ENCODE measurements at regions of chr6 and their contacts with region 1.

Region 1: GRCh38 chr6:159862103-159862502 is 28.7 kb upstream of the MAS1 start:
- DNase-seq: peak; percentile 12
- ATAC-seq: peak; percentile 53
- H3K4me3 Mint-ChIP-seq: no peak overlapping the region
- H3K27ac Mint-ChIP-seq: peak overlapping the region; percentile 21
- H3K4me1 Mint-ChIP-seq: peaks cover 15% of the 10 kb centered on the region
- H3K27me3 Mint-ChIP-seq: peaks cover 2% of the 10 kb centered on the region
- CTCF ChIP-seq: no peak

Region 2: GRCh38 chr6:159627939-159628338 is 234.2 kb before region 1 on chr6:
- CTCF ChIA-PET with region 1: no interaction called
- POLR2A ChIA-PET with region 1: no interaction called
- intact Hi-C with region 1: no loop called
- DNase-seq: no peak
- ATAC-seq: no peak
- H3K4me3 Mint-ChIP-seq: no peak overlapping the region
- H3K27ac Mint-ChIP-seq: no peak overlapping the region
- H3K4me1 Mint-ChIP-seq: no peaks in the 10 kb centered on the region
- H3K27me3 Mint-ChIP-seq: no peaks in the 10 kb centered on the region
- CTCF ChIP-seq: no peak

Region 3: GRCh38 chr6:159941286-159942113 is 79.4 kb after region 1 on chr6:
- CTCF ChIA-PET with region 1: interaction called, 9 read pairs
- POLR2A ChIA-PET with region 1: no interaction called
- intact Hi-C with region 1: loop called (anchors 5 kb)
- DNase-seq: peak; percentile 61
- ATAC-seq: peak; percentile 92
- H3K4me3 Mint-ChIP-seq: no peak overlapping the region
- H3K27ac Mint-ChIP-seq: no peak overlapping the region
- H3K4me1 Mint-ChIP-seq: peaks cover 5% of the 10 kb centered on the region
- H3K27me3 Mint-ChIP-seq: no peaks in the 10 kb centered on the region
- CTCF ChIP-seq: peak; percentile 42

Region 4: GRCh38 chr6:160102956-160103824 is 241.1 kb after region 1 on chr6:
- CTCF ChIA-PET with region 1: interaction called, 3 read pairs
- POLR2A ChIA-PET with region 1: no interaction called
- intact Hi-C with region 1: loop called (anchors 10 kb)
- DNase-seq: peak; percentile 47
- ATAC-seq: peak; percentile 55
- H3K4me3 Mint-ChIP-seq: no peak overlapping the region
- H3K27ac Mint-ChIP-seq: no peak overlapping the region
- H3K4me1 Mint-ChIP-seq: peaks cover 12% of the 10 kb centered on the region
- H3K27me3 Mint-ChIP-seq: no peaks in the 10 kb centered on the region
- CTCF ChIP-seq: peak; percentile 51

Region 5: DNA sequence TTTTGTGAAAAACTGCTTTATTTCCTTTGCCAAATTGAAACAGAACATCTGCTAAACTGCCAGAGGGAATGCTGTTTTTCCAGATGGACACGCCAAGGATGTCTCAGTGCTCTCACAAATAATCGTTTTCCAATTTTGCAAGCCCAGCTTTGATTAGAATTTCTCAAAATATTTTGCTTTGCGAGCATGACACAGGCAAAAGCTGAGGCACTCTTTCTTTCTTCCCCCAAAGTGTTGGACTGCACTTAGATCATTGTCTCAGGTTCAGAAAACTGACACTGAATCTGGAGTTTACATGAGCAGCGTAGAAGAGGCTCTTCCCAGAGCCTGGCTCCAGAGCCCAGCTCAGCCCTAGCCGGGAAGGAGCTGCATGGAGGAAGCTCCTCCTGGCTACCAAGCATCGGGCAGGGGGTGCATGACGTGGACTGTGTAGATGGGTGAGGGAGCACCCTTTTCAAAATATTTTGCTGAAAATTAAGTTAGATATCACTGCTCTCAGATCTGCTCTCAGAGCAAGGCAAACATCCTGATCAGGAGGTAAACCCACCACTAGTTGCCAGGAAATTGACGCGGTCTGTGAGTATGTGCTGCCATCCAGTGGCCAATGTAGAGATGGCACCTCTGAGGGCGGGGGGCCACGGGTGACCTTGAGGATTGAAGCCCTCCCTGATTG is 593.6 kb after region 1 on chr6:
- CTCF ChIA-PET with region 1: interaction called, 8 read pairs
- POLR2A ChIA-PET with region 1: no interaction called
- intact Hi-C with region 1: loop called (anchors 10 kb)
- DNase-seq: peak; percentile 72
- ATAC-seq: peak; percentile 96
- H3K4me3 Mint-ChIP-seq: no peak overlapping the region
- H3K27ac Mint-ChIP-seq: no peak overlapping the region
- H3K4me1 Mint-ChIP-seq: peaks cover 18% of the 10 kb centered on the region
- H3K27me3 Mint-ChIP-seq: peaks cover 24% of the 10 kb centered on the region
- CTCF ChIP-seq: peak; percentile 97

Measured in activated CD8-positive, alpha-beta T cell treated with anti-CD3 and anti-CD28 coated beads for 36 hours (primary cell).